HEK293 (cell line): ENCODE measurements at regions of chr5 and their contacts with region 1.

Region 1: GRCh38 chr5:14399054-14399692 is 182.4 kb upstream of the OTULINL start:
- H3K4me3 ChIP-seq: no peak overlapping the region
- H3K27ac ChIP-seq: no peak overlapping the region
- H3K4me1 ChIP-seq: no peaks in the 10 kb centered on the region
- CTCF ChIP-seq: 0 out of 2 replicates have a peak, but pooled peaks have one; percentile 25

Region 2: GRCh38 chr5:13878357-13878756 is 520.8 kb before region 1 on chr5:
- CTCF ChIA-PET with region 1: no interaction called
- POLR2A ChIA-PET with region 1: no interaction called
- H3K4me3 ChIP-seq: no peak overlapping the region
- H3K27ac ChIP-seq: no peak overlapping the region
- H3K4me1 ChIP-seq: no peaks in the 10 kb centered on the region
- CTCF ChIP-seq: no peak

Region 3: GRCh38 chr5:14364576-14365472 is 34.3 kb before region 1 on chr5:
- CTCF ChIA-PET with region 1: interaction called, 10 read pairs
- POLR2A ChIA-PET with region 1: no interaction called
- H3K4me3 ChIP-seq: no peak overlapping the region
- H3K27ac ChIP-seq: no peak overlapping the region
- H3K4me1 ChIP-seq: no peaks in the 10 kb centered on the region
- CTCF ChIP-seq: peak; percentile 18; the same call in 1 of the 2 replicates

Region 4: GRCh38 chr5:14386884-14387624 is 12.1 kb before region 1 on chr5:
- CTCF ChIA-PET with region 1: interaction called, 36 read pairs
- POLR2A ChIA-PET with region 1: interaction called, 8 read pairs
- H3K4me3 ChIP-seq: no peak overlapping the region
- H3K27ac ChIP-seq: no peak overlapping the region
- H3K4me1 ChIP-seq: no peaks in the 10 kb centered on the region
- CTCF ChIP-seq: no peak

Region 5: DNA sequence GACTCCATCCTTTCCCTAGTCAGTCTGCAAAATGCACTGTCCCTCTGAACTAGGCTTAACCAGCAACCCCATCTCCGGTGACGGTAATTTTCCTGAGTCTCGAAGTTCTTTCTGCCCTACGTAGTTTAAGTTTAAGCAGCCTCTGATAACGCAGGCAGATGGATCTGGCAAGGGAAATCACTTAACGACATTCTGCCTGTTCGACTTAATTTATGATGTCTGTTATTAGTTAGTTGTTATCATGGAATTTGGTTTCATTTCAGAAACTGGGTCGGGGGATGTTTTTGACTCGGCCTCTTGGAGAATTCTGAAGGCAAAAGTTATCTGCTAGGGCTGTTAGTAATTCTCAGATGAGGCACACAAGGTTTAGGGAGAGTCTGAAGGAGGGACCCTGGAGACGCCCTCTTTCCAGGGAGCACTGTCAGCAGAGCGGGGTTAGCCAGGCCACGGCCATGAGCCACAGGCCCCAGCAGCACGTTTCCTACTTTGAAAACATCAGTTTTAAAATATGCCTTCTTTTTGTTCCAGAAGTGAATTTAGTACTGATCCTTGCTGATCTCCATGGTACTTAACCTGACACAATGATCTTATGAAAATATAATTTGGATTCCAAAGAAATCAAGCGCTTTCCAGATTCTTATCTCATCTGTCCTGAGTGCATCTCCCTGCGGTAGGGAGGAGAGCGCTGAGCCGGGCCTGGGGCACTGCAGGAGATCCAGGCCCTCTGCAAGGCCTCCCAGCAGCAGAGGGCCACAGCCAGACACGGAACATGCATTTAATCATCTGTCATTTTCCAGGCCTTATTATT is 11.4 kb after region 1 on chr5:
- CTCF ChIA-PET with region 1: interaction called, 15 read pairs
- POLR2A ChIA-PET with region 1: no interaction called
- H3K4me3 ChIP-seq: no peak overlapping the region
- H3K27ac ChIP-seq: no peak overlapping the region
- H3K4me1 ChIP-seq: no peaks in the 10 kb centered on the region
- CTCF ChIP-seq: no peak

Region 6: DNA sequence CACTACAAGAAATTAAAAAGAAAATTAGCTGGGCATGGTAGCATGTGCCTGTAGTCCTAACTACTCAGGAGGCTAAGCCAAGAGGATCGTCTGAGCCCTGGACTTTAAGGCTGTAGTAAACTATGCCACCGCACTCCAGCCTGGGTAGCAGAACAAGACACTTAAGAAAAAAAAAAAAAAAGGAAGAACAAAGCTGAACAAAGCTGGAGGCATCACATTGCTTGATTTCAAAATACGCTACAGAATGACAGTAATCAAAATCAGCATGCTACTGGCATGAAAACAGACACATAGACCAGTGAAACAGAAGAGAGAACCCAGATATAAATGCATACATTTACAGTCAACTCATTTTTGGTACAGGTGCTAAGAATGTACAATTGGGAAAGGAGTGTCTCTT is 250.9 kb after region 1 on chr5:
- CTCF ChIA-PET with region 1: interaction called, 54 read pairs
- POLR2A ChIA-PET with region 1: no interaction called
- H3K4me3 ChIP-seq: no peak overlapping the region
- H3K27ac ChIP-seq: no peak overlapping the region
- H3K4me1 ChIP-seq: no peaks in the 10 kb centered on the region
- CTCF ChIP-seq: no peak